Gastrocnemius medialis (tissue), 4 donors: ENCODE measurements at regions of chr7 and their contacts with region 1.

Region 1: DNA sequence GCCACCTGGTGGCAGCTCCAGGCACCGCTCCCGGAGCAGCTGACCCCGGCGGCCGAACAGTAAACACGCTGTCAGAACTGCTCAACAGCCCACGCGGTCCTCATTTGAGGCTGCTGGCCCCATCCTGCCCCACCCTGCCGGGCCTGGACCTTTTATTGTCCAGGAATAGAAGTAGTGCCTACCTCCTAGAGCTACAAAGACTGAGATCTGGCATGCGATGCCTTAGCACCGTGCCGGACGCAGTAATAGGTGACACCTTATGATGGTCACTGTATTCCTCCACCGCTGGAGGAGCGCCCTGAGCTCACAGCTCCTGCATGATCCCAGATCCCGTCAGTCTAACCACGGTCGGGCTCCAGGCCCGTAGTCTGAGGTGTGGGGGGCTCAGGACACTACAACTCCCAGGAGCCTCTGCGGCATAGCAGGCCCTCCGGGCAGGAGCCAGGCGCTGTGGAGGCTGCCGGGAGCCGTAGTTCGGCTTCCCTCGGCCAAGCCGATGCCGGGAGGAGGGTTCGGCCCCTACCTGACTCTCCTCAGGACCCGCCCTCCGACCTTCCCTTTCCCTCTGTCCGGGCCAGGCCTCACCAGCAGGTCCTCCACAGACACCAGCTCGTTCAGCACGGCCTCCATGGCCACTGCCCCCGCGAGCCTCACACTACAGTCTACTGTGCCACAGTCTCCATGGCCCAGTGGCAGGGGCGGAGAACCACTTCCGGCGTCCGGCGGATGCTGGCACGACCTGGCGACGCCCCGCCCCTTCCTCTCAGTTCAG is at the start of gene FIS1:
- DNase-seq: peak; percentile 89 to 91
- ATAC-seq: peak; percentile 95 to 96
- H3K4me3 ChIP-seq: peak within 1 kb of the TSS; percentile 78 to 83 (median 80)
- H3K27ac ChIP-seq: peak within 1 kb of the TSS; percentile 95 to 100 (median 97)
- H3K4me1 ChIP-seq: peaks cover 42 to 43% of the 10 kb centered on the region in 2 donors
- H3K27me3 ChIP-seq: no peaks in the 10 kb centered on the region
- CTCF ChIP-seq: peak; percentile 45 to 98 (median 95)
- POLR2A ChIP-seq: peak; percentile 86 to 87
- total RNA-seq, gene FIS1: 319 to 467 (median 364) TPM

Region 2: DNA sequence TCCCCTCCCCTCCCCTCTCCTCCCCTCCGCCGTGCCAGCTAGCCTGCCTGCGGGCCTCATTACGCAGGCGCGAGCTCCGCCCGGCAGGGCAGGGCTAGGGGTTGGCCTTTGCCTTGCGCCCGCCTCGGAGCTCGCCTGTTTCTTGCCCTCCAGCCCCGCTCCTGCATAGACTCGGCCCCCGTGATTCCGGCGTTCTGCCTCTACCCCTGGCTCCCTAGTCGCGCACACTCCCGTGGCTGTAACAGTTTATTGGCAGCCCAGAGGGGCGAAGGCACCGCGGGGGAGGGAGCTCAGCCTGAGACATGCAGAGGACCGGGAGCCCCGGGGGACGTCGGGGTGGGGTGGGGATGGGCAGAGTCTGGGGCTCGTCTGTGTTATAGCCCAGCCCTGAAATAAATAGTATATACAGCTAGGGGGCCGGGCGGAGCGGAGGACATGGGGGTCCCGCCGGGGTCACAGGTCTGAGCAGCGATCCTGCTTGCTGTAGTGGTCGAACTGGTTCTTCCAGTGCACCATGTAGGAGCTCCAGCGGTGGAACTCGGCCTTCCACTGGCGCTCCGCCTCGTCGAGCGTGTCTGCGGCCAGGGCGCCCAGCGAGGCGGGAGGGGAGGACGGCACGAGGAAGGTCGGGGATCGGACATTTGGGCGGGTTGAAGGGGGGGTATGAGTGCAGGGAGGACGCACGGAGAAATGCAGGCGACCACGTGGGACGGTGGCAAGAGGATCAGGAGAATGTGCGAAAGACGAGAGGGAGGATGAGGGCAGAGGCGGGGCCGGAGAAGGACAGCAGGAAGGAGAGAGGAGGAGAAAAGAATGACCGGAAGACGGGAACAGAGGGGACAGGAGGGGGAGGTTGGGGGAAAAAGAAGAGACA is 354.6 kb before region 1 on chr7:
- in situ Hi-C with region 1: no loop called
- intact Hi-C with region 1: loop called (anchors 10 kb)
- DNase-seq: peak; percentile 92
- ATAC-seq: peak; percentile 78 to 82
- H3K4me3 ChIP-seq: peak overlapping the region; percentile 69 to 89 (median 85)
- H3K27ac ChIP-seq: peak overlapping the region; percentile 95 to 99 (median 97)
- H3K4me1 ChIP-seq: peaks cover 28 to 49% of the 10 kb centered on the region in 2 donors
- H3K27me3 ChIP-seq: peaks cover 0 to under 1% (median 0%) of the 10 kb centered on the region in 3 donors
- CTCF ChIP-seq: peak in 1 of 5 experiments; percentile 10
- POLR2A ChIP-seq: peak; percentile 75 to 76

Region 3: GRCh38 chr7:101085162-101085987 is 159.2 kb before region 1 on chr7 and contains the start of gene TRIM56:
- in situ Hi-C with region 1: no loop called
- intact Hi-C with region 1: loop called (anchors 5 kb)
- DNase-seq: peak; percentile 76 to 91
- ATAC-seq: peak; percentile 93 to 94
- H3K4me3 ChIP-seq: peak within 1 kb of the TSS; percentile 74 to 87 (median 76)
- H3K27ac ChIP-seq: peak within 1 kb of the TSS; percentile 90 to 94 (median 91)
- H3K4me1 ChIP-seq: peaks cover 15 to 18% of the 10 kb centered on the region in 2 donors
- H3K27me3 ChIP-seq: no peaks in the 10 kb centered on the region
- CTCF ChIP-seq: no peak
- POLR2A ChIP-seq: peak in 1 of 2 donors; percentile 59
- total RNA-seq, gene TRIM56: 4.2 to 11.4 (median 6.9) TPM

Region 4: DNA sequence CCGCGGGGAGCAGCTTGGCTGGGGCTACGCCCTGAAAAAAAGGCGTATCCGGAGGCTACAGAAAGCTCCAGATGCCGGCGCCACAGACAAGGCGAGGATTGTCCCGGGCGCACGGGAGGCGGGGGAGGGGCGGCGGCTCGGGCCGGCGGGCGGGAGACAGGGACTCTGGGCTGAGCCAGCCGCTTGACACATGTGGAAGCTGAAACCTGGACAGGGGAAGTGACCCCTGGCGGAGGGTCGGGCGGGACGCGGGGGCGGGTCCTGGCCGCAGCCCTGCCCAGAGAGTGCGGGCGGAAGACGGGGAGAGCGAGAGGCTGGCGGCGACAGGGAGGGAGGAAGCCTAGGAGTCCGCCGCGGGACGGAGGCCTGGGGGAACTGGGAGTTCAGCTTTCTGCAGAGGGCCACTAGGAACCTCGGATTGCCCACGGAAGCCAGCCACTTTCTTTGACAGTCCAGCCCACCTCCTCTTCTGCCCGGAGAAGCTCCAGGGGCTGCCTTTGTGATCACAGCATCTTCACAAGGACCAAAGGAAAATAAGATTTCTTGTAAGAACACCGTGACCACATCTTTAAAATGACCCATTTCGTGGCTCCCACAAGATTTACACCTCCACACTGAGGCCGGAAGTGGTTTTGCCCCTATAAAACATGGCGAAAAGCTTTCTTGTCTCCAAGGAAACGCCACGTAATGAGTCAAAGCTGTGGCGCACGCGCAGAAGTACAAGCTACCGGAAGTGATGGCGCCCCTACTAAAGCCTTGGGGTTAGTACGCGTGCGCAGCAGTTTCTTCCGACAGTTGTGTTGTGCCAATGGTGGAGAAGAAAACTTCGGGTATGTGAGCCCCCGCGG is 26.9 kb before region 1 on chr7 and contains the starts of genes PLOD3 and ZNHIT1:
- in situ Hi-C with region 1: no loop called
- intact Hi-C with region 1: loop called (anchors 1 kb)
- DNase-seq: peak; percentile 95 to 96
- ATAC-seq: peak; percentile 98 to 99
- H3K4me3 ChIP-seq: peak within 1 kb of the TSS; percentile 68 to 91 (median 74)
- H3K27ac ChIP-seq: peak within 1 kb of the TSS; percentile 82 to 92 (median 88)
- H3K4me1 ChIP-seq: peaks cover 23 to 32% of the 10 kb centered on the region in 2 donors
- H3K27me3 ChIP-seq: no peaks in the 10 kb centered on the region
- CTCF ChIP-seq: peak in 2 of 5 experiments; percentile 41 to 48
- POLR2A ChIP-seq: peak in 1 of 2 donors; percentile 16
- total RNA-seq, gene PLOD3: 8.2 to 24.2 (median 15.5) TPM
- total RNA-seq, gene ZNHIT1: 66.7 to 83.9 (median 71.9) TPM

Region 5: GRCh38 chr7:101299511-101300464 is 55.2 kb after region 1 on chr7:
- in situ Hi-C with region 1: no loop called
- intact Hi-C with region 1: no loop called
- DNase-seq: no peak
- ATAC-seq: no peak
- H3K4me3 ChIP-seq: peak overlapping the region in 1 of 4 donors; percentile 17
- H3K27ac ChIP-seq: no peak overlapping the region
- H3K4me1 ChIP-seq: no peaks in the 10 kb centered on the region
- H3K27me3 ChIP-seq: peaks cover 70 to 80% (median 80%) of the 10 kb centered on the region in 3 donors
- CTCF ChIP-seq: no peak
- POLR2A ChIP-seq: no peak

Region 6: DNA sequence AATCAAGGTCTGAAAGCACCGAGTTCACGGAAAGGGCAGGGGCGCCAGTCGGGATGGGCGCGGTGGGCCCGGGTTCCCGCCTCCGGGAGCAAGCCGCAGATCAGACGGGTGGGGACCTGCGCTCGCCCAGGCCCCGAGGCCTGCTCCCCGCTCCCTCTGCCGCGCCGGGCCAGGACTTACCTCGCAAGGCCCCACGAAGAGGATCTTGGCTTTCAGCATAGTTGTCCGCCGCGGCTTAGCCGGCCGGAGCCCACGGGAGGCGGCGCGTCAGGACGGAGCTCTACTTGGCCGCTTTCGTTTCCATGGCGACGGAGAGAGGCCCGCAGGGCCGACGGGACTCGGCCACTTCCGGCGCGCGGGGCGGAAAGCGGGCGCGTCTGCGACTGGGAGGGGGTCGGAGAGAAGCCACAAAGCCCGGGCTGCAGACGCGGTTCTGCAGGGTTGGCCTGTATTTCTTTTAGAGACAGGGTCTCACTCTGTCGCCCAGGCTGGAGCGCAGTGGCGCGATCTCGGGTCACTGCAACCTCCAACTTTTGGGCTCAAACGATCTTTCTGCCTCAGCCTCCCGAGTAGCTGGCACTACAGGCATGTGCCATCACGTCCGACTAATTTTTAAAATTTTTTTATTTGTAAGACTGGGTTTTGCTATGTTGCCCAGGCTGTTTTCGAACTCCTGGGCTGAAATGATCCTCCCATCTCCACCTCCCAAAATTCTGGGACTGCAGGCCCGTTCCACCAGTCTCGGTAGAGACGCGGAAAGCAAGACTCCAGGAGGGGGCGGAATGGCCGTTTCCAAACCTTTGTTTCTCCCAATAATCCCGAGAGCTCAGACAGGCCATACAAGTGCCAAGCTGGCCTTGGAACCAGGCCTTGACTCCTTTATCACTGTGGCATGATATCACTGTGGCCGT is 77.2 kb after region 1 on chr7 and contains the start of gene IFT22:
- in situ Hi-C with region 1: no loop called
- intact Hi-C with region 1: loop called (anchors 2 kb)
- DNase-seq: peak; percentile 77 to 80
- ATAC-seq: peak; percentile 97 to 98
- H3K4me3 ChIP-seq: peak within 1 kb of the TSS; percentile 69 to 95 (median 89)
- H3K27ac ChIP-seq: peak within 1 kb of the TSS; percentile 65 to 78 (median 74)
- H3K4me1 ChIP-seq: peaks cover 6% of the 10 kb centered on the region in 2 donors
- H3K27me3 ChIP-seq: peaks cover under 1 to 5% (median 4%) of the 10 kb centered on the region in 3 donors
- CTCF ChIP-seq: no peak
- POLR2A ChIP-seq: peak in 1 of 2 donors; percentile 11
- total RNA-seq, gene IFT22: 13.4 to 32.3 (median 28.9) TPM

Region 7: DNA sequence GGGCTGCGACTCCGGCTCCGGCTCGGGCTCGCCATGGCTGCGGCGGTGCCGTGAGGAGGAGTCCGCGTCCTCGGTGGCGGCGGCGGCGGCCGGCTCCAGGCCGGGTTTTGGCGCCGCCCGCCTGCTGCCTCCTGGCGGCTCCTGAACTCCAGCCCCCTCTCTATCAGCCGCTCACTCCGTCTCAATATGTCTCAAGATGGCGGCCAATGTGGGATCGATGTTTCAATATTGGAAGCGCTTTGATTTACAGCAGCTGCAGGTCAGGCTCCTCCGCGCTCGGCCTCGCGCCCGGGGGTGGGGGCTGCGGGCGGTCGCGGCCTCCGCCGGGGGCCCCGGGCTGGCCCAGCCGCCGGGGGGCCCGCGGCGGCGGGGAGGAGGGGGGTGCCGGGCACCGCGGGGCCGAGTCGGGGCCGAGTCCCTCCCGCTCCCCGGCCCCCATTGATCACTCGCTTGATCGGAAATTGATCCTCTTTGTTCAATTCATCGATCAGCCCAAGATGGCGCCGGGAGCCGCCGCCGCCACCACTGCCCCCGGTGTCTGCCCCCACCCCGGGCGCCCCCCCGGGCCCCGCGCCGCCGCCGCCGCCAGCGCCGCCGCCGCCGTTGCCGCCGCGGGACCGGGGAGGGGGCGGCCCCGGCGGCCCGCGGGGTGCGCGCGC is 571.4 kb after region 1 on chr7:
- in situ Hi-C with region 1: no loop called
- intact Hi-C with region 1: no loop called
- DNase-seq: peak; percentile 59 to 71
- ATAC-seq: peak; percentile 73 to 75
- H3K4me3 ChIP-seq: peak overlapping the region; percentile 50 to 81 (median 74)
- H3K27ac ChIP-seq: peak overlapping the region; percentile 74 to 86 (median 86)
- H3K4me1 ChIP-seq: peaks cover 23 to 28% of the 10 kb centered on the region in 2 donors
- H3K27me3 ChIP-seq: no peaks in the 10 kb centered on the region
- CTCF ChIP-seq: peak in 2 of 5 experiments; percentile 5 to 16
- POLR2A ChIP-seq: no peak